ENCODE measurements at regions of chr10 and their contacts with region 1.

Region 1: DNA sequence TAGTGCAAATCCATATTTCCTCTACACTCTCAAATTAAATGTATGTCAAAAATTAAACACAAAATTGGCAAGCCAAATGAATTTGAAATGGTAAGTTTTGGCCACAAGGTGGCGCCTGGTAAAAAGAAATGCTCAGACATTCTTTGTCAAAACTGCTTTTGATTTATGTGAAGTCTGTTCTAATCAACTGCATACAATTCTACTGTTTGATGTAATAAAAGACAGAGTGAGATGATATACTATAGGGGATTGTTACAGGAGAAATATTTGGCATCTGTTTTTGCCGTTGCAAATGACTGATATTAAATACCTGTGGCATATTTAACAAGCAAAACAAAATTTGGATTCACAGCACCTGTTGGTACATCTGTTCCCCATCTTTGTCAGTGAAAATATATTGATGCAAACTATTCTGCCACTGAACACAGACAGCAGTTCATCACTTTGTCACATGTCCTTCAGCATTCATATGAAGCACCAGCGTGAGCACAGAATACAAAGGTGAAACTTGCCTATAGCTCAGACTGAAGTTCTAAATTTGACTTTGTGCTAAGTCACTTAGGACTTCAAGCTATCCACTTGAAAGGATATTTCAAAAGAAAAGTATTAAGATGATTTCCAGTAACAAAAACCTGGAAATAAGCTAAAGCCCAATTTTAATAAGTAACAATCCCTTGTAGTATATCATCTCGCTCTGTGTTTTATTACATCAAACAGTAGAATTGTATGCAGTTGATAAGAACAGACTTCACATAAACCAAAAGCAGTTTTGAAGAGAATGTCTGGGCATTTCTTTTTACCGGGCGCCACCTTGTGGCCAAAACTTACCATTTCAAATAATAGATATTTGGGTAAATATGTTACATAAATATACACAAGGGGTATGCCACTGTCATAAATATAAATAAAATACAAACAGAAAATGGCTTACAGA is 10.2 kb upstream of the CH25H start:
- DNase-seq: peak; percentile 30 to 75 (median 68)
- ATAC-seq: peak; percentile 63
- H3K4me3 ChIP-seq: no peak overlapping the region
- H3K4me3 Mint-ChIP-seq: no peak overlapping the region
- H3K27ac ChIP-seq: no peak overlapping the region
- H3K27ac Mint-ChIP-seq: peak overlapping the region; percentile 41
- H3K4me1 ChIP-seq: peaks cover 6% of the 10 kb centered on the region
- H3K4me1 Mint-ChIP-seq: peaks cover 8% of the 10 kb centered on the region
- H3K27me3 ChIP-seq: no peaks in the 10 kb centered on the region
- H3K27me3 Mint-ChIP-seq: no peaks in the 10 kb centered on the region
- CTCF ChIP-seq: peak; percentile 81

Region 2: DNA sequence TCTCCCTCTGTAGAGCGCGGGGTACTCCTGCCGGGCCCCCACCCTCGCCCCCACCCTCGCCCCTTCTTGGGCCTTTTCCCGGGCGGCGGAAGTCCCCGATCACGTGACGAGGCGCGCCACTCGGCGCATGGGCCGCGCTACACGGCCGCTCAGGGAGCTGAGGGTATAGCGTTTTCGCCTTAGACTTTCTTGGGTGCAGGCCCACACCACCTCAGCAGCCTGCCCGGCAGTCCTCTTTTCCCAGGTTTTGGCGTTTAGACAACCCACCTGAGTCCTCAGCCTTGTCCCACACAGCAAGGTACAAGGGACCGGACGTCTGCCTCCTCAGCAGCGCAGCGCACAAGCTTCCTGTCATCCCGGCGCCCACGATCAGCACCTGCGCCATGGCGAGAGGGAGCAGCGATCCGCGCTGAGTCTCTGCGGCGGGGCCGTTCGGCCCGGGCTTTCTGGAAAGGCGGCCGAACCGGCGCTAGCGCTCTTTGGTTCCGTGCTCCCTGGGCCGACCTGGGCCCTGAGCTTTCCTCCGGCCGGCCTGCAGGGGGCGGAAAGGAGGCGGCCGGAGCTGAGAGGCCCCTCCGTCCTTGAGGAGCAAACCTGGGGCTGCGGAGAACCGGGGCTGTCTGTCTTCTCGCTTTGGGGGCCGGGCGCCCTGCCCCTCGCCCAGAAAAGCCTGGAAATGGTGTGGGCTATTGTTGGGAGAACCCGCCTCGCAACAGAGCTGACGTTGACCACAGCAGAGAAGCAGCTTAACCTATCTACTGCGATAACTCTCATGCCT is 634.3 kb before region 1 on chr10 and contains the start of gene RNLS:
- CTCF ChIA-PET with region 1: interaction called, 3 read pairs
- POLR2A ChIA-PET with region 1: no interaction called
- intact Hi-C with region 1: loop called in 1 of 2 experiments (anchors 5 kb)
- DNase-seq: peak; percentile 21 to 84 (median 65)
- ATAC-seq: peak; percentile 83
- H3K4me3 ChIP-seq: peak within 1 kb of the TSS; percentile 83
- H3K4me3 Mint-ChIP-seq: peak within 1 kb of the TSS; percentile 91
- H3K27ac ChIP-seq: peak within 1 kb of the TSS; percentile 72 to 83
- H3K27ac Mint-ChIP-seq: peak within 1 kb of the TSS; percentile 92
- H3K4me1 ChIP-seq: peaks cover 7% of the 10 kb centered on the region
- H3K4me1 Mint-ChIP-seq: peaks cover 11% of the 10 kb centered on the region
- H3K27me3 ChIP-seq: no peaks in the 10 kb centered on the region
- H3K27me3 Mint-ChIP-seq: peaks cover 3% of the 10 kb centered on the region
- CTCF ChIP-seq: peak; percentile 61
- total RNA-seq, gene RNLS: 1.6 to 1.7 TPM

Region 3: DNA sequence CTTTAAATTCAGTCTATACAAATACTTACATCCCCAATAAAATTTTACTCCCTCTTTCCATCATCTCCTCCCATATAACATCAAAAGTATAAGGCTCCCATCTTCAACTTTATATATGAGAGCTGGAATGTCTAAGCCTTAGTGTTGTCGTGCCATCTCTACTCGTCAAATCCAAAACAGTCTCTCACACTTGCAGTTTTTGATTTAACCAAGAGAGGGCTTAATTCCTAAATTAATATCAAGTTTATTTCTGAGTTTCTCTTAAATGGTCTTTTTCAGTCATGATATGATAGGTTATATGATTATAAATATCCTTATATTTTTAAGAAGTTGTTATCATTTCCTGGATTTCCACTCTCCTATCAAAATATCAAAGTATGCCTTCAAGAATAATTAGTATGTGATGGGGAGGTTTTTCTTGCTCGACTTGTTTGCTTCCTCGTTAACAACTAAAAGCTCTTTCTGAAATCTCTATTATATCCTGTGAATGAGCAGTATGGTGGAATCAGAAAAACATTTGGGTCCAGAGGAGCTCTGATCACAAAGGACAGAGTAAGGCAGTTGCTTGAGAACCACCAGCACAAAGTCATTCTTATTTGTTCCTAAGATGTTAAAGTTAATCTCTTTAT is 523.8 kb before region 1 on chr10:
- CTCF ChIA-PET with region 1: no interaction called
- POLR2A ChIA-PET with region 1: no interaction called
- intact Hi-C with region 1: loop called (anchors 5 to 10 kb)
- DNase-seq: no peak
- ATAC-seq: no peak
- H3K4me3 ChIP-seq: no peak overlapping the region
- H3K4me3 Mint-ChIP-seq: no peak overlapping the region
- H3K27ac ChIP-seq: no peak overlapping the region
- H3K27ac Mint-ChIP-seq: no peak overlapping the region
- H3K4me1 ChIP-seq: no peaks in the 10 kb centered on the region
- H3K4me1 Mint-ChIP-seq: no peaks in the 10 kb centered on the region
- H3K27me3 ChIP-seq: no peaks in the 10 kb centered on the region
- H3K27me3 Mint-ChIP-seq: no peaks in the 10 kb centered on the region
- CTCF ChIP-seq: no peak

Region 4: DNA sequence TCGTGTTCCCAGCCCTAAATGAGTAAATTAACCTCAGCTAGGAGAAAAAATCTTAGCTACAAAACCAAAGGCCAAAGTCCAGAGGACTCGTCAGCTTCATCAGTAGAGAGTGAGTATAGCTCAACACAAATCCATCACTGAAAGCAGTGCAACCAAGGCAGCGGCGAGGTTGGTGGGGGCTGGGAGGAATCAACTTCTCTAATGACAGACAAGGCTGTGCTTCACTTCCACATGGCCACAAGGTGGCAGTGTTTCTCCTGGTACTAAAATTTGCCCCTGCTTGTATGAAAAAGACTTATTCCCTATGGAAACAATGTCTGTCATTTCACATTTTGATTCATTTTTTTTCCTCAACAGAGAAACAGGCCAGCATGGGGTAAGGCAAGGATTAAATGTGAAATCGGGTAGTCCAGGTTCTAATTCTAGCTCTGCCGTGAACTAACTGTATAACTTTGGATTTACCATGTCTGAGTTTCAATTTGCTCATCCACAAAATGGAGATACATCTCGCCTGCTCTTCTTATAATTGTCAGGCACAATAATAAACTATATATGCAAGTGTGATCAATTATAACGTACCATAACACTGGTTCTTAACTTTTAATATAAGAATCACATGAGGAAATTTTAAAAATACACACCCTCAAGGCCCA is 187.4 kb before region 1 on chr10:
- CTCF ChIA-PET with region 1: interaction called, 79 read pairs
- POLR2A ChIA-PET with region 1: interaction called, 4 read pairs
- intact Hi-C with region 1: loop called (anchors 1 kb)
- DNase-seq: peak; percentile 34 to 81 (median 68)
- ATAC-seq: peak; percentile 87
- H3K4me3 ChIP-seq: no peak overlapping the region
- H3K4me3 Mint-ChIP-seq: no peak overlapping the region
- H3K27ac ChIP-seq: no peak overlapping the region
- H3K27ac Mint-ChIP-seq: no peak overlapping the region
- H3K4me1 ChIP-seq: no peaks in the 10 kb centered on the region
- H3K4me1 Mint-ChIP-seq: peaks cover 4% of the 10 kb centered on the region
- H3K27me3 ChIP-seq: no peaks in the 10 kb centered on the region
- H3K27me3 Mint-ChIP-seq: no peaks in the 10 kb centered on the region
- CTCF ChIP-seq: peak; percentile 91

Region 5: GRCh38 chr10:89235073-89235798 is 17.9 kb after region 1 on chr10:
- CTCF ChIA-PET with region 1: interaction called, 24 read pairs
- POLR2A ChIA-PET with region 1: no interaction called
- intact Hi-C with region 1: no loop called
- DNase-seq: peak in 1 of 9 experiments; percentile 19
- ATAC-seq: no peak
- H3K4me3 ChIP-seq: no peak overlapping the region
- H3K4me3 Mint-ChIP-seq: no peak overlapping the region
- H3K27ac ChIP-seq: no peak overlapping the region
- H3K27ac Mint-ChIP-seq: no peak overlapping the region
- H3K4me1 ChIP-seq: no peaks in the 10 kb centered on the region
- H3K4me1 Mint-ChIP-seq: no peaks in the 10 kb centered on the region
- H3K27me3 ChIP-seq: no peaks in the 10 kb centered on the region
- H3K27me3 Mint-ChIP-seq: no peaks in the 10 kb centered on the region
- CTCF ChIP-seq: no peak

Region 6: GRCh38 chr10:89262086-89263051 is 45.0 kb after region 1 on chr10:
- CTCF ChIA-PET with region 1: no interaction called
- POLR2A ChIA-PET with region 1: no interaction called
- intact Hi-C with region 1: no loop called
- DNase-seq: no peak
- ATAC-seq: no peak
- H3K4me3 ChIP-seq: no peak overlapping the region
- H3K4me3 Mint-ChIP-seq: no peak overlapping the region
- H3K27ac ChIP-seq: no peak overlapping the region
- H3K27ac Mint-ChIP-seq: no peak overlapping the region
- H3K4me1 ChIP-seq: no peaks in the 10 kb centered on the region
- H3K4me1 Mint-ChIP-seq: peaks cover 5% of the 10 kb centered on the region
- H3K27me3 ChIP-seq: no peaks in the 10 kb centered on the region
- H3K27me3 Mint-ChIP-seq: peaks cover 2% of the 10 kb centered on the region
- CTCF ChIP-seq: no peak

Region 7: DNA sequence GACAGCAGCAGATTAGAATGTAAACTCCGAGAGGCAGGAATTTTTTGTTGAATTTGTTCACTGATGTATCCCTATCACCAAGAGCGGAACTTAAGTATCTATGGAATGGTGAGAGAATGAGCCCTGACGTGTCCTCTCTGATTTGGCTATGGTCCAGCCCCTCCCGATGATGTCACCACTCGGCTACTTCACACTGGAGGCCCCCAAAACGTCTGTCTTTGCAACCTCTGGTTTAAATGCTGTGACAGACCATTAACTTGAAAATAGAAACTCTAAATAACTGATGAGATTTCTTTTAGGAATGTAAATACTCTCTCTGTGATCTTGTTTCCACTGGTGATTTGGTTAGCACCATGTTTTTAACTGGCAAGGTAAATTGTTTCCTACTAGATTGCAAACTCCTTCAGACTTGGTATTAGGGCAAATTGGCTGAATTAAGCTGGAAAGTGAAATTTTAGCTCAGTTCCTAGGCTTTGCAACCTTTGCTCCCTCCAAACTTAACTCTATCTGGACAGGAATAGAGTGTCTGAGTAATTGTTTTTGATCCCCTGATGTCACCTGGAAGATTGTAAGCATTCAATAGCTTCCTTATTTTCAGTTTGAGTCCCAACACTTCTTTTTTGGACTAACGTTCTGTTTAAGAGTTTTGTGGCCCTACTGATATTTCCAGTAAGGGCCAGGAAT is 299.0 kb after region 1 on chr10:
- CTCF ChIA-PET with region 1: no interaction called
- POLR2A ChIA-PET with region 1: no interaction called
- intact Hi-C with region 1: no loop called
- DNase-seq: no peak
- ATAC-seq: no peak
- H3K4me3 ChIP-seq: no peak overlapping the region
- H3K4me3 Mint-ChIP-seq: no peak overlapping the region
- H3K27ac ChIP-seq: no peak overlapping the region
- H3K27ac Mint-ChIP-seq: no peak overlapping the region
- H3K4me1 ChIP-seq: no peaks in the 10 kb centered on the region
- H3K4me1 Mint-ChIP-seq: no peaks in the 10 kb centered on the region
- H3K27me3 ChIP-seq: no peaks in the 10 kb centered on the region
- H3K27me3 Mint-ChIP-seq: no peaks in the 10 kb centered on the region
- CTCF ChIP-seq: no peak

Region 8: DNA sequence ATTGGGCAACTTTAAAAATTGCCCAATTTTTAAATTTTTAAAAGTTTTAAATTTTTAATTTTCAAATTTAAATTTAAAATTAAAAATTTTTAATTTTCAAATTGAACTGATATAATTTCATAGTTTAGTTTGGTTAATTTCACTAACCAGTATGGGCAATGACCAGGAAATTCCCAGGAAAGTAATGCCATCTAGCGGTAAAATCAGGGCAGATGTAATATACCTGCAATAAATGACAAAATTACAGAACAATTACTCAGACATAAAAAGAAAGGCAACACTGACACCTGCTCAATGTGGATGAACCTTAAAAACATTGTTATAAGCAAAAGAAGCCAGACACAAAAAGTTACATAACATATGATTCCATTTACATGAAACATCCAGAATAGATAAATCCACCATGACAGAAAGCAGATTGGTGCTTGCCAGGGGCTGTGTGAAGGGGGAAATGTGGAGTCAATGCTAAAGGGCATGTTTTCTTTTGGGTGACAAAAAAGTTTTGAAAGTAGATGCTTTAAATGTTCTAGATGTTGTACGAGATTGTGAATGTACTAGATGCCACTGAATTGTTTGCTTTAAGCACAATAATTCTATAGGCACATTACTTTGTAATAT is 346.6 kb after region 1 on chr10:
- CTCF ChIA-PET with region 1: interaction called, 7 read pairs
- POLR2A ChIA-PET with region 1: no interaction called
- intact Hi-C with region 1: loop called (anchors 1 to 2 kb)
- DNase-seq: peak in 3 of 9 experiments; percentile 13 to 71 (median 60)
- ATAC-seq: peak; percentile 59
- H3K4me3 ChIP-seq: no peak overlapping the region
- H3K4me3 Mint-ChIP-seq: no peak overlapping the region
- H3K27ac ChIP-seq: no peak overlapping the region
- H3K27ac Mint-ChIP-seq: no peak overlapping the region
- H3K4me1 ChIP-seq: no peaks in the 10 kb centered on the region
- H3K4me1 Mint-ChIP-seq: no peaks in the 10 kb centered on the region
- H3K27me3 ChIP-seq: no peaks in the 10 kb centered on the region
- H3K27me3 Mint-ChIP-seq: peaks cover 6% of the 10 kb centered on the region
- CTCF ChIP-seq: peak; percentile 81